ENCODE measurements at regions of chr2 and their contacts with region 1.

Region 1: GRCh38 chr2:75466708-75467311 is 93.9 kb downstream of the EVA1A start:
- DNase-seq: peak in 6 of 35 experiments; percentile 1 to 22 (median 4)
- ATAC-seq: no peak
- H3K4me3 ChIP-seq: no peak overlapping the region
- H3K4me3 Mint-ChIP-seq: no peak overlapping the region
- H3K27ac ChIP-seq: no peak overlapping the region
- H3K27ac Mint-ChIP-seq: no peak overlapping the region
- H3K4me1 ChIP-seq: no peaks in the 10 kb centered on the region
- H3K4me1 Mint-ChIP-seq: no peaks in the 10 kb centered on the region
- H3K27me3 ChIP-seq: no peaks in the 10 kb centered on the region
- H3K27me3 Mint-ChIP-seq: peaks cover 20 to 33% of the 10 kb centered on the region in 2 donors

Region 2: DNA sequence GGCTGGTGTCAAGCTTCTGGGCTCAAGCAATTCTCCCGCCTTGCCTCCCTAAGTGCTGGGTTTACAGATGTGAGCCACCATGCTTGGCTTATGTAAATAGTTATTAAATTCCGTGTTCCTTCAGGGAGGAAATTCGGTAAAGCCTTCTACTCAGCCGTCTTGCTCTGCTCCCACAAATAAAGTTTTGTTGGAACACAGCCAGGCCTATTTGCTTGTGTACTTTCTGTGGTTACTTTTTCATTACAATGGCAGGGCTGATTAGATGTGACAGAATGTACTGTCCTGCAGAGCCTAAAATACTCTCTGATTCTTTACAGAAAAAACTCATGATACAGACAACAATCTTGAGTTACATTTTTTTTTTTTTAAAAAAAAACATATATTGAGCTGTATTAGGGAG is 198.7 kb before region 1 on chr2:
- CTCF ChIA-PET with region 1: interaction called in 1 of 2 experiments, 11 read pairs
- POLR2A ChIA-PET with region 1: no interaction called
- DNase-seq: no peak
- ATAC-seq: no peak
- H3K4me3 ChIP-seq: no peak overlapping the region
- H3K4me3 Mint-ChIP-seq: no peak overlapping the region
- H3K27ac ChIP-seq: no peak overlapping the region
- H3K27ac Mint-ChIP-seq: no peak overlapping the region
- H3K4me1 ChIP-seq: no peaks in the 10 kb centered on the region
- H3K4me1 Mint-ChIP-seq: no peaks in the 10 kb centered on the region
- H3K27me3 ChIP-seq: no peaks in the 10 kb centered on the region
- H3K27me3 Mint-ChIP-seq: no peaks in the 10 kb centered on the region

Measured in T-cell (primary cell).